ENCODE measurements at regions of chrX and their contacts with region 1.

Region 1: DNA sequence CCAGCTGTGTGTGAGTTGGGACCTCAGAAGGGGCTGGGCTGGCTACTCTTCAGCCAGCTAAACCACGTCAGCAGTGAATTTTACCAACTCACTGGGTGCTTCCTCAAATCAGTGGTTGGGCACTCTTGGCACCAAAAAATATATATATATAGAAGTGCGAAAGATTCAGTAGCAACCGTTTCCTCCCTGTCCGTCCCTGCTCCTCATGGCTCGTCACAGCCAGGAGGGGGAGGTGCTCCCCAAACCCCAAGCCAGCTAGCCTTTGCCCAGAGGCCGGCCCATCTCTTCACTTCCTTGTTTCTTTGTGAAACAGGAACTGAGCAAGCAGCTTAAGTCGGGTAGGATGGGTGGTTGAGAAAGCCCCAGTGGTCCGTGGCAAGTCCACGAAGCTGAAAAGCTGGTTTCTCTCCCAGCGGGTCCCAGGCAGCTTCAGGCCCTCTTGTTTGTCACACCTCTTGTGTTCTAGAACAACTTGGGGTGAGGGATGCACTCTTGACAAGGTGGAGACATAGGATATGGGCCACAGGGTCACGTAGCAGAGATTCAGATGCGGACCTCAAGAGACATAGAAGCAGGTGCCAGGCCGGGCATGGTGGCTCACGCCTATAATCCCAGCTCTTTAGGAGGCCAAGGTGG is 6.8 kb upstream of the SASH3 start:
- DNase-seq: peak; percentile 66
- ATAC-seq: peak; percentile 17
- H3K4me3 Mint-ChIP-seq: peak overlapping the region; percentile 49
- H3K27ac Mint-ChIP-seq: peak overlapping the region; percentile 95
- H3K4me1 Mint-ChIP-seq: peaks cover 82% of the 10 kb centered on the region
- H3K27me3 Mint-ChIP-seq: no peaks in the 10 kb centered on the region

Region 2: DNA sequence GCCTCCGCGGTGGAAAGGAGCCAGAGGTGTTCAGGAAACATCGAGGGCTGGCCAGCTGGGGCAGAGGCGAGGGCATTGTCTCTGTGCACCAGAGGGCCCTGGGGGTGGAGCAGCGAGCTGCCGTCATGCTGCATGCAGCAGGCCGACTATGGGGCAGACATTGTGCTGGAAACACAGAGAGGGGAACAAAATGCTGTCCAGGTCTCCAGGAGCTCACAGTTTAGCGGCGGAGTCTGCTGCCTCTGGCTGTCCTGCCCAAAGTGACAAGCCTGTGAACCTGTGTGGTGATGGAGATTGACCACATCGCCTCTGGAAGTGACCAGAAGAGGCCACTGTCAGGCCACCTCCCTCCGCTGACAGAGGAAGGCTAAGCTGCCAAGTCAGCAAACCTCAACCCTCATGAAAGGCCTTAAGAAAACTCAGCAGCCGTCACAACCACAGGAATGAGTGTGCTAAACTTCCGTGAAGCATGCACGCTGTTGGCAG is 13.3 kb before region 1 on chrX:
- CTCF ChIA-PET with region 1: interaction called, 19 read pairs
- POLR2A ChIA-PET with region 1: interaction called, 165 read pairs
- DNase-seq: peak; percentile 76
- ATAC-seq: peak; percentile 77
- H3K4me3 Mint-ChIP-seq: peak overlapping the region; percentile 28
- H3K27ac Mint-ChIP-seq: peak overlapping the region; percentile 89
- H3K4me1 Mint-ChIP-seq: peaks cover 75% of the 10 kb centered on the region
- H3K27me3 Mint-ChIP-seq: no peaks in the 10 kb centered on the region

Measured in activated CD8-positive, alpha-beta T cell treated with anti-CD3 and anti-CD28 coated beads, Interleukin-2, amount 10 ng/mL, durations not matched to agents 7 days and 5 days (primary cell).